ENCODE measurements at regions of chr6 and their contacts with region 1.

Region 1: GRCh38 chr6:506508-506907 is 115.0 kb downstream of the IRF4 start:
- DNase-seq: peak; percentile 76
- H3K4me3 Mint-ChIP-seq: peak overlapping the region; percentile 30
- H3K27ac Mint-ChIP-seq: peak overlapping the region; percentile 100
- H3K4me1 Mint-ChIP-seq: peaks cover 95% of the 10 kb centered on the region
- H3K27me3 Mint-ChIP-seq: no peaks in the 10 kb centered on the region

Region 2: GRCh38 chr6:558089-558488 is 51.6 kb after region 1 on chr6:
- CTCF ChIA-PET with region 1: no interaction called
- POLR2A ChIA-PET with region 1: interaction called, 5 read pairs
- intact Hi-C with region 1: loop called (anchors 1 kb)
- DNase-seq: no peak
- H3K4me3 Mint-ChIP-seq: no peak overlapping the region
- H3K27ac Mint-ChIP-seq: peak overlapping the region; percentile 87
- H3K4me1 Mint-ChIP-seq: peaks cover 60% of the 10 kb centered on the region
- H3K27me3 Mint-ChIP-seq: no peaks in the 10 kb centered on the region